GM12878 (cell line): ENCODE measurements at regions of chr2 and their contacts with region 1.

Region 1: GRCh38 chr2:11583840-11584524 is 50.1 kb downstream of the GREB1 start:
- DNase-seq: peak; percentile 46
- ATAC-seq: peak; percentile 91
- H3K4me3 ChIP-seq: no peak overlapping the region
- H3K27ac ChIP-seq: no peak overlapping the region
- H3K4me1 ChIP-seq: no peaks in the 10 kb centered on the region
- H3K27me3 ChIP-seq: peaks cover 0 to 2% of the 10 kb centered on the region in 2 experiments; a peak in 1 of 4 replicates
- CTCF ChIP-seq: peak; percentile 90 to 98 (median 92)
- EP300 ChIP-seq: no peak
- POLR2A ChIP-seq: no peak
- RAD21 ChIP-seq: peak; percentile 90

Region 2: DNA sequence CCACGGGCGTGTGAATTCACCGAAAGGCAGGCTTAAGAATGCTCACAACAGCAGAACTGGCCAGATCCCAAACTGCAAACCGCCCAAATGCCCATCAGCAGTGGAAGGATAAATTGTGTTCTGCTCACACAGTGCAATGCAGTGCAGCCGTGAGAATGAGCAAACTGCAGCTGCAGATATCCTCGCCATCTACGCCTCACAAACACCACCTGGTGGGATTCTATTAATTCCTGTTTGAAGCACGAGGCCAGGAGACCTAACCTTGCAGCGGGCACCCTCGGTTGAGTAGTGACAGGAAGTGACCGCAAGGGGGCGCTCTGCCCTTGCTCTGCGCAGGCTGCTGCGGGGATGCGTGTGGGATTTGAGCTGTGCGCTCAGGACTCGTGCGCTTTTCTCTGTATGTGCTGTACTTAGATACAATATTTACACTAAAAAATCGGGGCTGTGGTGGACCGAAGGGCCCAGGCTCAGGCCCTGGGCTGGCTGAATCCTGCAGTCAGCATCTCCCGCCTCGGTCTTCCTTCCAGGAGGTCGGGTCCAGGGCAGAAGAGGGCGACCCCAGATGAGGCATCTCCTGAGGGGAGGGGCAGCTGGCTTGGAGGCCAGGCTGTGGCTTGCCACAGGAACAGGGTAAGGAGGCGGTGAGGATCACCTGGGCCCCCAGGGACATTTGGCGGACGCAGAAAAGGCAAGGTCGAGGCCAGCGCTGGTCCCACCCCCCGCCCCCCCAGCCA is 751.6 kb before region 1 on chr2:
- CTCF ChIA-PET with region 1: no interaction called
- POLR2A ChIA-PET with region 1: no interaction called
- RAD21 ChIA-PET with region 1: no interaction called
- SMC1A ChIA-PET with region 1: no interaction called
- in situ Hi-C with region 1: loop called (anchors 5 kb)
- intact Hi-C with region 1: loop called (anchors 10 kb)
- DNase-seq: peak; percentile 12
- ATAC-seq: peak; percentile 90
- H3K4me3 ChIP-seq: no peak overlapping the region
- H3K27ac ChIP-seq: no peak overlapping the region
- H3K4me1 ChIP-seq: no peaks in the 10 kb centered on the region
- H3K27me3 ChIP-seq: no peaks in the 10 kb centered on the region; a peak in 3 of 4 replicates
- CTCF ChIP-seq: peak; percentile 91 to 97 (median 93); a peak in 5 of 6 replicates
- EP300 ChIP-seq: no peak
- POLR2A ChIP-seq: no peak
- RAD21 ChIP-seq: peak; percentile 90

Region 3: GRCh38 chr2:11239666-11240462 is 344.1 kb before region 1 on chr2:
- CTCF ChIA-PET with region 1: interaction called, 16 read pairs
- POLR2A ChIA-PET with region 1: no interaction called
- RAD21 ChIA-PET with region 1: no interaction called
- SMC1A ChIA-PET with region 1: interaction called, 8 read pairs
- in situ Hi-C with region 1: no loop called
- intact Hi-C with region 1: loop called (anchors 5 kb)
- DNase-seq: no peak
- ATAC-seq: no peak
- H3K4me3 ChIP-seq: no peak overlapping the region
- H3K27ac ChIP-seq: no peak overlapping the region
- H3K4me1 ChIP-seq: no peaks in the 10 kb centered on the region
- H3K27me3 ChIP-seq: no peaks in the 10 kb centered on the region
- CTCF ChIP-seq: no peak
- EP300 ChIP-seq: no peak
- POLR2A ChIP-seq: no peak
- RAD21 ChIP-seq: no peak

Region 4: DNA sequence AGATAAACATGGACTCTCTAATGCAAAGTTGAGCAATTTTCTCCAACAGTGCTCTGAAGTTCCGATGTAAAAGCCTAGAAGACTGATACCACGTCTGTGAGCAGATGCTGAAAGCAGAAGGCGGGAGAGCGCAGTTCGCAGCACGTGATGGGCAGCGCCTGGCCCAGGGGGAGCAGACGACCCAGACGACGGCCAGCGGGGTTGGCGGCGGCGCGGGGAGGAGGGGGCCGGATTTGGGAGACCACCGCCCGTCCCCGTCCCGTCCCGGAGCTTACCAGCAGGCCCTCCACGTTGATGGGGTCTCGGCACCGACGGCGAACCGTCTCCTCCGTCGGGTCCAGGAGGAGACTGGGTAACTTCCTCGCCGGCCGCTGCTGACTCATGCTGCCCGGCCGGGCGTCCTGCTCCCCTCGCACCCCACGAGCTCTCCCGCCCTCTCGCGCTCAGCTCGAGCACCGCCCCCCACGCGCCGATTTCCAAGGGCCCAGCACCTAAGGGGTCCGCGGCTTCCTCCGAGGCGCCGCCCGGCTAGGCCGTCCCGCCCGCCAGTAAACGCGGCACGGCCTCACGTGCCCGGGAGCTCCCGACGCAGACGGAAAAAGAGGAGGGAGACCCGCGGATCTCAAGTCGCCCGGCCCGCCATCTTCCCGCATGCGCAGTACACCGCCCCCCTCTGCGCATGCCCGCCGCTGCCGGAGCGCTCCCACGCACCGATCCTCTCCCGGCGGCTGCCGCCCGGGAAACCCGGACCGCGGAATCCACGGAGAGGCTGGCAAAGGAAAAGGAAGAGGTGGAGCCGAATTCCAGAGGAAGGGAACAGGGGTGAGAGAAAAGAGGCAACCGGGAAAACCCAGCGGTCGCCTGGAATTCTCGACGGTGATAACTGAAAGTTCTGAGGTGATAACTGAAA is 118.2 kb before region 1 on chr2 and contains the start of gene E2F6:
- CTCF ChIA-PET with region 1: interaction called, 32 read pairs
- POLR2A ChIA-PET with region 1: no interaction called
- RAD21 ChIA-PET with region 1: no interaction called
- SMC1A ChIA-PET with region 1: interaction called, 3 read pairs
- in situ Hi-C with region 1: no loop called
- intact Hi-C with region 1: no loop called
- DNase-seq: peak; percentile 24
- ATAC-seq: peak; percentile 84
- H3K4me3 ChIP-seq: peak within 1 kb of the TSS; percentile 86
- H3K27ac ChIP-seq: peak within 1 kb of the TSS; percentile 63
- H3K4me1 ChIP-seq: peaks cover 13% of the 10 kb centered on the region; the same call in 1 of the 2 replicates
- H3K27me3 ChIP-seq: no peaks in the 10 kb centered on the region
- CTCF ChIP-seq: no peak
- EP300 ChIP-seq: 0 out of 4 replicates have a peak, but pooled peaks of 1 of the 2 experiments have one; percentile 13
- POLR2A ChIP-seq: peak; percentile 76
- RAD21 ChIP-seq: no peak
- polyA plus RNA-seq, gene E2F6: 4.2 to 5.3 TPM

Region 5: GRCh38 chr2:11534744-11535484 is 49.1 kb before region 1 on chr2:
- CTCF ChIA-PET with region 1: interaction called, 13 read pairs
- POLR2A ChIA-PET with region 1: no interaction called
- RAD21 ChIA-PET with region 1: interaction called, 3 read pairs
- SMC1A ChIA-PET with region 1: no interaction called
- in situ Hi-C with region 1: no loop called
- intact Hi-C with region 1: no loop called
- DNase-seq: no peak
- ATAC-seq: 0 out of 3 replicates have a peak, but pooled peaks have one; percentile 16
- H3K4me3 ChIP-seq: no peak overlapping the region
- H3K27ac ChIP-seq: no peak overlapping the region
- H3K4me1 ChIP-seq: no peaks in the 10 kb centered on the region
- H3K27me3 ChIP-seq: peaks cover 0 to 2% of the 10 kb centered on the region in 2 experiments; a peak in 1 of 4 replicates
- CTCF ChIP-seq: peak; percentile 6 to 29 (median 29); a peak in 4 of 6 replicates
- EP300 ChIP-seq: no peak
- POLR2A ChIP-seq: no peak
- RAD21 ChIP-seq: no peak

Region 6: GRCh38 chr2:11778923-11779757 is 195.2 kb after region 1 on chr2:
- CTCF ChIA-PET with region 1: interaction called, 5 read pairs
- POLR2A ChIA-PET with region 1: no interaction called
- RAD21 ChIA-PET with region 1: no interaction called
- SMC1A ChIA-PET with region 1: no interaction called
- in situ Hi-C with region 1: no loop called
- intact Hi-C with region 1: loop called (anchors 5 kb)
- DNase-seq: no peak
- ATAC-seq: peak; percentile 97
- H3K4me3 ChIP-seq: no peak overlapping the region
- H3K27ac ChIP-seq: no peak overlapping the region
- H3K4me1 ChIP-seq: peaks cover 7% of the 10 kb centered on the region
- H3K27me3 ChIP-seq: no peaks in the 10 kb centered on the region
- CTCF ChIP-seq: peak; percentile 92 to 95 (median 94)
- EP300 ChIP-seq: no peak
- POLR2A ChIP-seq: no peak
- RAD21 ChIP-seq: peak; percentile 97